ENCODE measurements at regions of chr11 and their contacts with region 1.

Region 1: DNA sequence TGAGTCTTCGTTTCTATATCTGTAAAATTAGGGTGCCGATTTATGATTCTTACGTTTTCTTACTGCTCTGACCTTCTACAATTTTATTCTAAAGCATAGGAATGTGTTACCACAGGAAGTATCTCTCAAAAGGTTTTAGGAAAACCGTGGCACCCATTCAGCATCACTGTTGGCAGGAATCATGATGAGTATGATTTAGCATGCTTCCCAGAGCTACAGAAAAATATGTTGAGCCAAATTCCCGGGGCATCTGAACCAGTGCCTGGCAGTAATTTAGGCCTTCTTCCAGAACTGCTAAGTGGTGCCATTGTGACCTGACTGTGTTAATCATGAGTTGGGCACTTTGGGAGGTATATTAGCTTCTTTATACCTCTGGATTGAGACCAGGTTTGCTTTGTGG is 605.0 kb upstream of the RAG2 start:
- DNase-seq: no peak
- H3K4me3 ChIP-seq: no peak overlapping the region
- H3K27ac ChIP-seq: no peak overlapping the region
- H3K4me1 ChIP-seq: no peaks in the 10 kb centered on the region
- H3K27me3 ChIP-seq: no peaks in the 10 kb centered on the region
- CTCF ChIP-seq: no peak

Region 2: GRCh38 chr11:37108436-37109285 is 94.3 kb before region 1 on chr11:
- CTCF ChIA-PET with region 1: no interaction called
- dilution Hi-C with region 1: loop called (anchors 25 kb)
- in situ Hi-C with region 1: no loop called
- intact Hi-C with region 1: no loop called
- DNase-seq: peak; percentile 23
- H3K4me3 ChIP-seq: no peak overlapping the region
- H3K27ac ChIP-seq: no peak overlapping the region
- H3K4me1 ChIP-seq: no peaks in the 10 kb centered on the region
- H3K27me3 ChIP-seq: peaks cover 2% of the 10 kb centered on the region
- CTCF ChIP-seq: no peak

Region 3: GRCh38 chr11:37141707-37142106 is 61.3 kb before region 1 on chr11:
- CTCF ChIA-PET with region 1: no interaction called
- dilution Hi-C with region 1: no loop called
- in situ Hi-C with region 1: no loop called
- intact Hi-C with region 1: no loop called
- DNase-seq: peak; percentile 4
- H3K4me3 ChIP-seq: no peak overlapping the region
- H3K27ac ChIP-seq: no peak overlapping the region
- H3K4me1 ChIP-seq: no peaks in the 10 kb centered on the region
- H3K27me3 ChIP-seq: no peaks in the 10 kb centered on the region
- CTCF ChIP-seq: peak; percentile 7 to 24

Region 4: DNA sequence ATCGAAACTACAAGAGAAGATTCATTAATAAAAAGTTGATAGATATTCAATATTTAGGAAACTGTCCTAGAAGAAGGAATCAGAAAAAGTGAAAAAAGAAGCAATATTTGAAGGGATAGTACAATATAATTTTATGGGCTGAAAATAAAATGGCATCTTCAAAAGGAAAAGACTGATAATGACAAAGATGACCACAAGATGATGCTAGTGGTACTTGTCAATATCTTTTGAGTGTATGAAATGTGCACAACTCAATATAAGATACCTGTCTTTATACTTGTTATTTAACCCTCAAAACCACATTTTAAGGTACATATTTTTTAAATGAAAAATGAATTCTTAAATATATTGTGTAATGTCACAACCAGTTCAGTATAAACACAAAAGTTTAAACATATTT is 454.6 kb after region 1 on chr11:
- CTCF ChIA-PET with region 1: no interaction called
- dilution Hi-C with region 1: no loop called
- in situ Hi-C with region 1: no loop called
- intact Hi-C with region 1: no loop called
- DNase-seq: peak; percentile 29
- H3K4me3 ChIP-seq: no peak overlapping the region
- H3K27ac ChIP-seq: no peak overlapping the region
- H3K4me1 ChIP-seq: no peaks in the 10 kb centered on the region
- H3K27me3 ChIP-seq: no peaks in the 10 kb centered on the region
- CTCF ChIP-seq: peak; percentile 74 to 82

Measured in mammary epithelial cell (primary cell).